Mammary epithelial cell (primary cell): ENCODE measurements at regions of chr2 and their contacts with region 1.

Region 1: DNA sequence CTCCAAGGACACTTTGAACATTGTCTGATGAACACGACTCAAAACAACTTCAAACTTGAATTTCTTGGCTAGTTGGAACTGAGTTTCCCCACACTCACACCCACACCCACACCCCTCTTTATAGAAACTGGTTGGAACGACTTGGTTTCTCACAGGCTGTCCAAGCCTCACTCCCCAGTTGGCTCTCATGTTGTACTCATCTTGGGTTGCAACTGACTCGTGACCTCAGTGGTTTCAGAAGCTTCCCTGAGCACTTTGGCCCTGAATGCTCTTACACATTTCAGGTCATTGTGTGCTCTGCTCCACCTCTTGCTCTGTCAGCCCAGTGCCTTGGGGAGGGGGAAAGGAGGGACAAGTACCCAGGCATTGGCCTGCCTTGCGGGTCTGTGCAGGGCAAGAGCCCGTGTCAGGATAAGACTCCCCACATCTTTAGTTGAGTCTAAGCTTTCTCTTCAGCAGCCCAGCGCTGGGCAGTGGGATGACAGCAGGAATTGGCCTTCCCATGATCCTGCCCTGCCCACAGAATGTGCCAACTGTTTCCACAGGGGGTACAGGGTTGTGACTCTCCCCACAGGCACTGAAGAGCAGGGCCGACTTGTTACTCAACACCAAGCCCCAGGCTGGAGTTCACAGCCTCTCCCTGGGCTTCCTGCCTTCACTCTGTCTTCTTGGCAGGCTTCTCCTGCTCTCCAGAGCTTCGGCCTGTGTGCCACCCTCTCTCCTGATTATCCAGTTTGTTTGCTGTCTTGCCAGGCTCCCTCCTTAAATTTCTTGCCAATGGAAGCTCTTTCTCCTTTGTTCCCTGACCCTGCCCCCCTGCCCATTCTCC is 104.6 kb downstream of the RTN4 start:
- DNase-seq: peak; percentile 81
- H3K4me3 ChIP-seq: no peak overlapping the region
- H3K27ac ChIP-seq: no peak overlapping the region
- H3K4me1 ChIP-seq: peaks cover 21% of the 10 kb centered on the region
- H3K27me3 ChIP-seq: no peaks in the 10 kb centered on the region
- CTCF ChIP-seq: no peak

Region 2: GRCh38 chr2:55099878-55100820 is 154.5 kb after region 1 on chr2:
- CTCF ChIA-PET with region 1: no interaction called
- dilution Hi-C with region 1: loop called (anchors 10 kb)
- in situ Hi-C with region 1: no loop called
- intact Hi-C with region 1: no loop called
- DNase-seq: no peak
- H3K4me3 ChIP-seq: no peak overlapping the region
- H3K27ac ChIP-seq: no peak overlapping the region
- H3K4me1 ChIP-seq: peaks cover 20% of the 10 kb centered on the region
- H3K27me3 ChIP-seq: no peaks in the 10 kb centered on the region
- CTCF ChIP-seq: no peak